ENCODE measurements at regions of chr7 and their contacts with region 1.

Region 1: DNA sequence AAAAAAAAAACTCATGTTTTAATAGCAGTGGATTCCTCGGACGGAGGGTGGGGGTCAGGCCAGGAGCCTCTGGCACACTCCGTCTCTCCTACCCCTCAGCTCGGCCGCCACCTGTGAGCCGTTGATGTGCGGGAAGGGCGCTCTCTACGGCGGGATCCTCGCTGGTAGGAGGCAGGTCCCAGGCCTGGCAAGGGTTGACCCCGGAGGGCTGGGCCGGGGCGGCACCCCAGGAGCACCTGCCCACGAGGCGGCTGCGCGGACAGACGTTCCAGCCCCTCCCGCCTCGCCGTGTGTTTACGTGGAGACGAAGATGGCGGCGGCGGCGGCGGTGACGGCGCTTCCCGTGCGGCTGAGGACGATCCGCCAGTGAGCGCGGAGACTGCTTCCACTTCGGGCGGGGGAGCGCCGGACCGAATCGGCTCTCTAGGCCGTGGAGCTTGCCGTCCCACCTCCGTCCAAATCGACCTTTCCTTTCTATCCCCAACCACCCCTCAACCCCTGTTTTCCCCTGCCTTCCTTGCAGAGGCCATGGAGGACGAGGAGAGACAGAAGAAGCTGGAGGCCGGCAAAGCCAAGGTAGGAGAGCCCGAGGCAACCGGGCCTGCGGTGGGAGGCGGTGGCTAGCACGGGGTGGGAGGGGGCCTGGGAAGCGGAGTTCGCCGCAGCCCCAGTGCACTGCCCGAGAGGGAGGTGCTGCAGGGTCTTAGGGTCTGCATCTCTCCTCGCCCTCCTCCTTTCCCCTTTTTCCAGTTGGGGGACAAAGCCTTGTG is at the start of gene AKAP9:
- DNase-seq: peak; percentile 90 to 94 (median 92)
- ATAC-seq: peak; percentile 94 to 98 (median 96)
- H3K4me3 ChIP-seq: peak within 1 kb of the TSS; percentile 68 to 90 (median 80)
- H3K27ac ChIP-seq: peak within 1 kb of the TSS; percentile 86 to 96 (median 92)
- H3K4me1 ChIP-seq: peaks cover 0 to 32% (median 22%) of the 10 kb centered on the region in 12 donors
- H3K27me3 ChIP-seq: no peaks in the 10 kb centered on the region
- CTCF ChIP-seq: no peak
- POLR2A ChIP-seq: peak in 1 of 2 donors; percentile 68
- total RNA-seq, gene AKAP9: 38.2 to 58.6 (median 51.8) TPM

Region 2: GRCh38 chr7:92075434-92076158 is 134.8 kb after region 1 on chr7:
- intact Hi-C with region 1: loop called in 1 of 10 experiments (anchors 10 kb)
- DNase-seq: no peak
- ATAC-seq: no peak
- H3K4me3 ChIP-seq: no peak overlapping the region
- H3K27ac ChIP-seq: no peak overlapping the region
- H3K4me1 ChIP-seq: no peaks in the 10 kb centered on the region
- H3K27me3 ChIP-seq: no peaks in the 10 kb centered on the region
- CTCF ChIP-seq: no peak
- POLR2A ChIP-seq: no peak

Region 3: DNA sequence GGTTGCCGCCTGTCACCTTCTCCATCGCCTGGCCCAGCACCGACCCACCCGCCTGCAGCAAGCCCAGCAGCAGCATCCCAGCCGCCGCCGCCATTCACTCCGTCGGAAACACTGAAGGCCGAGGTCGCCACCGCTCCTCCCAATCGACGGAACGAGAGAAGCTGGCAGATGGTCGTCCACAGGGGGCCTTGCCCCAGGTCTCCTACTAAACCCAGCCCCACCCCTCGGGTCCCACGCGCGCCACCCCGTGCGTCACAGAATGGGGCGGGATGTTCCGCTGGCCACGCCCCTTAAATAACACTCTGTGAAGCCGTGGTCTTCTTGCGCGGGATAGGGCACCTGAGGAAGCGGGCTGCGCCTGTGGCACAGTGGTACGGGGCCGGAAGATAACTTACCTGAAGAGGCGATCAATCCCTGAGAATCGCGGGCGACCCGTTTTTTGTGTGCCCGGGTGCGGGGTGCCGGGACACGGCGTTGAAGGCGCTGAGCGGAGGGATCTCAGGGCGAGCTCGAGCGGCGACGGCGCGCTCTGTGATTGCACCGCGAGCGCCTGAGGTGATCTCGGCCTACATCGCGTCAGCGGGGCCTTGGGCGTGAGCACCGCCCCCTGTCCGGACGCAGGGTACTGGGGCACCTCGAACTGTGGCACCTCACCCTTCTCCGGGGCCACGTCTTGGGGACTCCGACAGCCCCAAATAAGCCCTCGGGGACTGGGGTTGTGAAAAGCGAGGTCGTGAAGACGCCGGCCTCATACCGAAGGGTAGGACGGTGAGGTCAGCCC is 193.7 kb after region 1 on chr7 and contains the start of gene CYP51A1:
- intact Hi-C with region 1: loop called in 1 of 10 experiments (anchors 5 kb)
- DNase-seq: peak; percentile 93 to 95 (median 94)
- ATAC-seq: peak; percentile 95 to 98 (median 98)
- H3K4me3 ChIP-seq: peak within 1 kb of the TSS; percentile 72 to 99 (median 94)
- H3K27ac ChIP-seq: peak within 1 kb of the TSS; percentile 62 to 97 (median 96)
- H3K4me1 ChIP-seq: peaks cover 0 to 26% (median 16%) of the 10 kb centered on the region in 12 donors
- H3K27me3 ChIP-seq: no peaks in the 10 kb centered on the region
- CTCF ChIP-seq: peak in 4 of 12 donors; percentile 8 to 38 (median 22)
- POLR2A ChIP-seq: peak; percentile 40 to 64
- total RNA-seq, gene CYP51A1: 16.6 to 42.2 (median 32.7) TPM